PC-3 (cell line): ENCODE measurements at regions of chr3 and their contacts with region 1.

Region 1: GRCh38 chr3:5026331-5027218 is 47.3 kb downstream of the BHLHE40 start:
- DNase-seq: peak; percentile 95
- ATAC-seq: peak; percentile 68
- H3K4me3 ChIP-seq: peak overlapping the region; percentile 64
- H3K27ac ChIP-seq: peak overlapping the region; percentile 96
- H3K4me1 ChIP-seq: peaks cover 43% of the 10 kb centered on the region
- H3K27me3 ChIP-seq: no peaks in the 10 kb centered on the region
- CTCF ChIP-seq: peak; percentile 76

Region 2: GRCh38 chr3:4565806-4566501 is 460.6 kb before region 1 on chr3:
- CTCF ChIA-PET with region 1: no interaction called
- POLR2A ChIA-PET with region 1: interaction called, 13 read pairs
- intact Hi-C with region 1: no loop called
- DNase-seq: peak; percentile 84
- ATAC-seq: peak; percentile 82
- H3K4me3 ChIP-seq: peak overlapping the region; percentile 8; the same call in 1 of the 2 replicates
- H3K27ac ChIP-seq: peak overlapping the region; percentile 87
- H3K4me1 ChIP-seq: peaks cover 50% of the 10 kb centered on the region
- H3K27me3 ChIP-seq: no peaks in the 10 kb centered on the region
- CTCF ChIP-seq: no peak

Region 3: DNA sequence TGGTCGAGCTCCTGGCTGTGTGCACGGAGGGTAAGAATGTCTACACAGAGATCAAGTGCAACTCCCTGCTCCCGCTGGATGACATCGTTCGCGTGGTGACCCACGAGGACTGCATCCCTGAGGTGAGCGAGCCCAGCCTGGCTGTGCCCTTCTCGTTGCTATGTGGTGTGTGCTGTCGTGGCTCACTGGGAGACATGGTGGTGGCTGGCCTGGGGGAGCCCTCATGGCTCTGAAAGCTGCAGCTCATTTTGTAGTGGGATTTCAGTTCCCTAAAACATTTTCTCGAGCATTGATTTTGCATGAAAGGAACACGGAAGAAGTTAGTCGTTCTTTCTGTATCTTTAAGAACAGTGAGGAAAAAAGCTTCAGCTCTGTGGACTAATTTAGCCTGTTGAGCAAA is 333.0 kb before region 1 on chr3:
- CTCF ChIA-PET with region 1: no interaction called
- POLR2A ChIA-PET with region 1: interaction called, 10 read pairs
- intact Hi-C with region 1: loop called (anchors 1 kb)
- DNase-seq: no peak
- ATAC-seq: no peak
- H3K4me3 ChIP-seq: no peak overlapping the region
- H3K27ac ChIP-seq: no peak overlapping the region
- H3K4me1 ChIP-seq: peaks cover 27% of the 10 kb centered on the region
- H3K27me3 ChIP-seq: no peaks in the 10 kb centered on the region
- CTCF ChIP-seq: no peak

Region 4: GRCh38 chr3:4722103-4722502 is 304.5 kb before region 1 on chr3:
- CTCF ChIA-PET with region 1: interaction called, 8 read pairs
- POLR2A ChIA-PET with region 1: interaction called, 13 read pairs
- intact Hi-C with region 1: loop called (anchors 1 kb)
- DNase-seq: peak; percentile 78
- ATAC-seq: peak; percentile 75
- H3K4me3 ChIP-seq: no peak overlapping the region
- H3K27ac ChIP-seq: peak overlapping the region; percentile 44
- H3K4me1 ChIP-seq: peaks cover 35% of the 10 kb centered on the region
- H3K27me3 ChIP-seq: no peaks in the 10 kb centered on the region
- CTCF ChIP-seq: peak; percentile 82

Region 5: GRCh38 chr3:4826237-4827100 is 200.1 kb before region 1 on chr3:
- CTCF ChIA-PET with region 1: interaction called, 3 read pairs
- POLR2A ChIA-PET with region 1: no interaction called
- intact Hi-C with region 1: loop called (anchors 2 kb)
- DNase-seq: no peak
- ATAC-seq: no peak
- H3K4me3 ChIP-seq: no peak overlapping the region
- H3K27ac ChIP-seq: peak overlapping the region; percentile 87
- H3K4me1 ChIP-seq: peaks cover 56% of the 10 kb centered on the region
- H3K27me3 ChIP-seq: no peaks in the 10 kb centered on the region
- CTCF ChIP-seq: no peak

Region 6: DNA sequence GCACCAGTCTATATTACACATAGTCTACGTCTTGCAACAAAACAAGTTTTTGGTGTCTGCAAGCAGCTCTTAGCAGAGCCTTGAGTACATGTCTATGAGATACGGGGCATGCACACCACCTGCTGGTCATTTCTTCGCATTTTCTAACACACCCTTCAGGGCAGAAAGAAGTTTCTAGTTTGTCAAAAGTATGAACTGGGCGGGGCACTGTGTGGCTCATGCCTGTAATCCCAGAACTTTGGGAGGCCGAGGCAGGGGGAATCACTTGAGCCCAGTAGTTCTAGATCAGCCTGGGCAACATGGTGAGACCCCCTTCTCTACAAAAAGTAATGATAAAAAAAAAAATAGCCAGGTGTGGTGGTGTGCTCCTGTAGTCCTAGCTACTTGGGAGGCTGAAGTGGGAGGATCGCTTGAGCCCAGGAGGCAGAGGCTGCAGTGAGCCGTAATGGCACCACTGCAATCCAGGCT is 31.3 kb after region 1 on chr3:
- CTCF ChIA-PET with region 1: interaction called, 6 read pairs
- POLR2A ChIA-PET with region 1: no interaction called
- intact Hi-C with region 1: loop called (anchors 1 kb)
- DNase-seq: peak; percentile 95
- ATAC-seq: peak; percentile 98
- H3K4me3 ChIP-seq: no peak overlapping the region
- H3K27ac ChIP-seq: peak overlapping the region; percentile 27
- H3K4me1 ChIP-seq: peaks cover 16% of the 10 kb centered on the region
- H3K27me3 ChIP-seq: no peaks in the 10 kb centered on the region
- CTCF ChIP-seq: peak; percentile 85